ENCODE measurements at regions of chr12 and their contacts with region 1.

Region 1: DNA sequence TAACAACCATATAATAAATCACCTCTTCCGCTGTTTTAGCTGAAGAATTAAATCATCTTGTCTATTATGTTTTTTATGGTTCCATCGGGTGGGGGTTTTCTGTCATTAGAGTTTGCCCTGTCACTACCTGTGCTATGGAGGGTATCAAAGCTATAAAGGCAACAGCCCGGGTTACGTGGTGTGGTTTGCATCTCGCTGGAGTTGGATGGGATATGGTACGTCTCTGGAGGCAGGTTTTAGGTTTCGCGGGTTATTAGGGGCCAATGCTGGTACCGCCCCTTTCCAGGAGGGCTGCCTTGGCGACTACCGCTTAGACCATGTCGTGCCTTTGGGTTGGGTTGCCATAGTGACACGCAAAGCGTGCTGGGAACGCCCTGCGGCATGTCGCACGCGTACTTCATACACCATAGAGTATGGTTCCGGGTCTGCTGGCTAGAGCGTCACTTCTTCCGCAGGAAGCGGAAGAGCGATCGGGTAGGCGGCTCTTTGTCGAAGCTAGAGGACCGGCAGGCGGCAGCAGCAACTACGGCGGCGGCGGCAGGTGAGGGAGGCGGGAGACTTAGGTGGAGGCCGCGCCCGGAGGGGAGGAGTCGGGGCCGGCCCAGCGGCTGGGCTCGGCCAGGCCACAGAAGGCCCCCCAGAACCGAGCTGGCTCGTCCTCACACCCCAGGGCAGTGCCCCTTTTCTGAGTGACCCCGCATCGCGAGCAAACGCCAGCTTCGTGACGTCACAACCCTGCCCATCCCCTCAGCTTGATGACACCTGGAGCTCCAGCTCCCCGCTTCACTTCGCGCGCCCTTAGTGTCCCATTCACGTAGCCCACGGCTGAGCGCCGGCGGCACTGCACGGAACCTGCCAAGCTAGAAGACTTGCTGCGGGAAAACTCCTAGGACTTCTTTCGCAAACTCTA is at the start of gene ZC3H10:
- DNase-seq: peak; percentile 97 to 98
- ATAC-seq: peak; percentile 80 to 86 (median 82)
- H3K4me3 ChIP-seq: peak within 1 kb of the TSS; percentile 81
- H3K27ac ChIP-seq: peak within 1 kb of the TSS; percentile 95
- H3K4me1 ChIP-seq: peaks cover 44% of the 10 kb centered on the region
- H3K27me3 ChIP-seq: no peaks in the 10 kb centered on the region
- CTCF ChIP-seq: peak; percentile 52
- total RNA-seq, gene ZC3H10: 5.0 to 10.3 (median 6.6) TPM

Region 2: GRCh38 chr12:56137853-56138571 is 20.0 kb after region 1 on chr12:
- intact Hi-C with region 1: no loop called
- DNase-seq: no peak
- ATAC-seq: no peak
- H3K4me3 ChIP-seq: no peak overlapping the region
- H3K27ac ChIP-seq: no peak overlapping the region
- H3K4me1 ChIP-seq: no peaks in the 10 kb centered on the region
- H3K27me3 ChIP-seq: no peaks in the 10 kb centered on the region
- CTCF ChIP-seq: no peak

Region 3: DNA sequence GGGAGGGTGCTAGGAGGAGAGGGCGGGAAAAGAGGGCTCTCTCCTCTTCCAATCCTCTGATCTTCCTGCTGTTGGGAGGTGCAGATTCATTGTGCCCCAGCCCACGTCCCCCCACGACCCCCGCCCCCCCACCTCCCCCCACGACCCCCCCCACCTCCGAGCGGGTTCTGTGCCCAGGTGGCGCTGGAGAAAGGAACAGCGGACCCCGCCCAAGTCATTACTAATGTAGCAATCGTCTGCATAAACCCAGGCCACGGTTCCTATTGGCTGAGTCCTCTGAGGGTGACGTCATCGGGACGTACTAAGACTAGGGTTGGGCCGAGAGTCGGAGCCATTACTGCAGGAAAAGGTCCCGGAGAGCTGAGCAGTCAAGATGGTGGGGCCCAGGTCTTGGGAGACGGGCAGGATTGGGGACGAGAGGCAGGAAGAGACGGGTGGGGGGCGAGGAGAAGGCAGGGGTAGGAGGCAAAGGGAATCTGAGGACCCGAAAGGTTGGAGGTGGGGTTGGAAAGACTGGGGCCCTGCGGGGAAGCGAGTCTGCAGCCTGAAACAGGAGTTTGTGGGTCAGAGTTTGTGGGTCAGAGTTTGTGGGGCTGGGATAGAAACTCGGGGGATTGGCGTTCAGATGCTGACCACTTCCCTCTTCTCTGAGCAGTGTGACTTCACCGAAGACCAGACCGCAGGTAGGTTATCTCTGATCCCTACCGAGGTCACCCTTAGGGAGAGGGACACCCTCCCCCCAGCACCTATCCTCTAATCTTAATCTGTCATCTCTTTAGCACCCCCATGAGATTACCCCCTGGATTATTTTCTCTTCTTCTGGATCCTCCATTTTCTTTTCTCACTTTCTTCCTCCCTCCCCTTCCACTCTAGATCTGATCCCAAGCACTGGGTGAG is 40.2 kb after region 1 on chr12 and contains the start of gene MYL6:
- intact Hi-C with region 1: loop called (anchors 2 to 5 kb)
- DNase-seq: peak; percentile 92 to 96
- ATAC-seq: peak; percentile 83 to 91 (median 87)
- H3K4me3 ChIP-seq: peak within 1 kb of the TSS; percentile 95
- H3K27ac ChIP-seq: peak within 1 kb of the TSS; percentile 94
- H3K4me1 ChIP-seq: peaks cover 30% of the 10 kb centered on the region
- H3K27me3 ChIP-seq: no peaks in the 10 kb centered on the region
- CTCF ChIP-seq: no peak
- total RNA-seq, gene MYL6: 216 to 395 (median 291) TPM

Region 4: DNA sequence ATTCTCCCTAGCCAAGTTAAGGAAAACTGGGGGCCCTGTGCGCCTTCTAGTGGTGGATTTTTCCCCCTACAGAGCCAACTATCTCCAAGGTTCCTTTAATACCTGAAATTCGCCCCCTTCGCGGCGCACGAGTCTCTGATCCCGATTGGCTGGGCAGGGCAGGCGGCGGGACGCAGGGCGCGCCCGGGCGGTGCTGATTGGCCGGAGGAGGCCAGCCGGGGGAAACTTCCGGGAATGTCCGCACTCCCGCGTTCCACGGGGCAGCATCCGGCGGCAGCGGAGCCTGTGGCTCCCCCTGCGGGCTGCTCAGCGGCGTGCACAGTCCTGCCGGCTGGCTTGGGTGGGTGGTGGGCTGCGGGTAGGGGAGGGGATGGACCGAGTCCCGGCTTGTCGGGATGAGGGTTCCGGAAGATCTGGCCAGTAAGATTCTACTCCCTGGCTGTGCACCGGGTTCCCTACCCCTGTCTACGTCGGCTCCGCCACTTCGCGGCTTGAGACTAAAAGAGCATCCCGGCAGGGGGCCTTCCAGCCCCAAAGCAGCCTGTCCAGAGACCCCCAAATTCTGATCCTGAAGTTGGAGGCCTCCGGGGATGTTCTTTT is 106.2 kb after region 1 on chr12 and contains the start of gene NABP2:
- intact Hi-C with region 1: loop called (anchors 1 to 5 kb)
- DNase-seq: peak; percentile 99
- ATAC-seq: peak; percentile 86 to 90 (median 89)
- H3K4me3 ChIP-seq: peak within 1 kb of the TSS; percentile 75
- H3K27ac ChIP-seq: peak within 1 kb of the TSS; percentile 96
- H3K4me1 ChIP-seq: peaks cover 34% of the 10 kb centered on the region
- H3K27me3 ChIP-seq: no peaks in the 10 kb centered on the region
- CTCF ChIP-seq: peak; percentile 84
- total RNA-seq, gene NABP2: 27.2 to 32.1 (median 29.8) TPM